Gastrocnemius medialis (tissue), 4 donors: ENCODE measurements at regions of chr12 and their contacts with region 1.

Region 1: GRCh38 chr12:92561543-92561899 is 141.3 kb upstream of the PLEKHG7 start:
- DNase-seq: peak; percentile 41 to 50
- ATAC-seq: peak; percentile 92 to 94
- H3K4me3 ChIP-seq: no peak overlapping the region
- H3K27ac ChIP-seq: peak overlapping the region; percentile 33 to 66 (median 57)
- H3K4me1 ChIP-seq: peaks cover 8 to 14% of the 10 kb centered on the region in 2 donors
- H3K27me3 ChIP-seq: no peaks in the 10 kb centered on the region
- CTCF ChIP-seq: no peak
- POLR2A ChIP-seq: no peak

Region 2: GRCh38 chr12:91811481-91812287 is 749.8 kb before region 1 on chr12:
- in situ Hi-C with region 1: loop called in 1 of 4 experiments (anchors 10 kb)
- intact Hi-C with region 1: no loop called
- DNase-seq: peak; percentile 19 to 27
- ATAC-seq: peak; percentile 50 to 60
- H3K4me3 ChIP-seq: no peak overlapping the region
- H3K27ac ChIP-seq: no peak overlapping the region
- H3K4me1 ChIP-seq: no peaks in the 10 kb centered on the region
- H3K27me3 ChIP-seq: no peaks in the 10 kb centered on the region
- CTCF ChIP-seq: peak; percentile 61 to 75 (median 68)
- POLR2A ChIP-seq: no peak

Region 3: GRCh38 chr12:92466391-92467305 is 94.9 kb before region 1 on chr12:
- in situ Hi-C with region 1: no loop called
- intact Hi-C with region 1: loop called (anchors 5 kb)
- DNase-seq: peak; percentile 61 to 65
- ATAC-seq: peak; percentile 77 to 78
- H3K4me3 ChIP-seq: peak overlapping the region; percentile 16 to 42 (median 28)
- H3K27ac ChIP-seq: peak overlapping the region; percentile 68 to 87 (median 78)
- H3K4me1 ChIP-seq: peaks cover 47 to 80% of the 10 kb centered on the region in 2 donors
- H3K27me3 ChIP-seq: no peaks in the 10 kb centered on the region
- CTCF ChIP-seq: no peak
- POLR2A ChIP-seq: peak in 1 of 2 donors; percentile 29

Region 4: DNA sequence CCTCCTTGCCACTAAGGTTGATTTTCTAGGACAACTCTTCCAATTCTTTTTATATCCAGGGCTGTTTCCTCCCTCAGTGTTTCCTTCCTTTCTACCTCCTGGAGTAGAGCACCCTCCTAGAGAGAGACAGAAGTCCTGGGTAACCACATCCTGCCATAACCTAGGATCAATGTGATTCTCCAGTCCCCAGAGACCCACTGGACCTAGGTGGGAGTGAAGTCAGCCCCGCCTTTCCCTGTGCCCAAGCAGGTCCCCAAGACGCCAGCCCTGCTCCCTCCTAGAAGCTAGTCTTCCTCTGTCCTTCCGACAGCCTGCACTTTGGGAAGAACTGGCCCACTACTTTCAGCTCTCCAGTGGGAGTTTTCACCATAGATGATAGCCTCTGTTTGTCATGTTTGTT is 25.6 kb before region 1 on chr12:
- in situ Hi-C with region 1: no loop called
- intact Hi-C with region 1: loop called (anchors 2 kb)
- DNase-seq: no peak
- ATAC-seq: no peak
- H3K4me3 ChIP-seq: no peak overlapping the region
- H3K27ac ChIP-seq: no peak overlapping the region
- H3K4me1 ChIP-seq: peaks cover 14 to 21% of the 10 kb centered on the region in 2 donors
- H3K27me3 ChIP-seq: no peaks in the 10 kb centered on the region
- CTCF ChIP-seq: no peak
- POLR2A ChIP-seq: no peak

Region 5: GRCh38 chr12:92958851-92959250 is 397.3 kb after region 1 on chr12:
- in situ Hi-C with region 1: no loop called
- intact Hi-C with region 1: no loop called
- DNase-seq: no peak
- ATAC-seq: no peak
- H3K4me3 ChIP-seq: no peak overlapping the region
- H3K27ac ChIP-seq: no peak overlapping the region
- H3K4me1 ChIP-seq: no peaks in the 10 kb centered on the region
- H3K27me3 ChIP-seq: peaks cover 0 to 2% (median 0%) of the 10 kb centered on the region in 3 donors
- CTCF ChIP-seq: no peak
- POLR2A ChIP-seq: no peak